Lower leg skin (tissue), 4 donors: ENCODE measurements at regions of chr10 and their contacts with region 1.

Region 1: DNA sequence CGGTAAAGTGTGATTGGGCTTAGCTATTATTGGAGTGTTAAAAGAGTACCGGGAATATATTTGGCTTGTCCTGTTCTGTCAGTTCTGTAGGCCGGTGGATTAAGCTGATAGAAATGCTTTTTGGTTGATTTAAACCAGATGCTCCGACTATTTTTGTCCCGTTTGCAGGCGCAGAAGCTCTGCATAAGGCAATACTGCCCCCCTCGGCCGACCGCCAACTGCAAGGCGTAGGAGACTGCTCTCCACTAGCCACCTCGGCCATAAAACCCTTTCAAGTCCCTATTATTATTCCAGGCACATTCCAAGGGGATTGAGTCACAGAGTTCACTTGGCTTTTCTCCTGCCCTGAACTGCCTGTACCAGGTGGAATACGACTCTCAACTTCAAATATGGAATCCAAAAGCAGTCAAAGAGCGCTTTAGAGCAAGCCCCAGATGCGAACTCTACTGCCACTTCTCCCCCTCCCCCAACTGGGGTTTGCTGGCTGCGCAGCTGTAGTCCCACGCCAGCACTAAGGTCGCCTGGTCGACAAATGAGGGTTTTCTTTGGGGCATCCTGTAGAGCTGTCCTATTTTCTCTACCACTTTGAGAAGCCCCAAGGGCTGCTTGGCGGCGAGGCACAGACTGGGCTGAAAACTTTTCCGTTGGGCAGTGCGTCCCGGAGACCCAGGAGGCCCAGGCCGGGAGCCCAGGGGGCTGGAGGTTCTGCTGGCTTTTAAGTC is 108.3 kb downstream of the REEP3 start:
- DNase-seq: peak; percentile 92 to 98
- H3K4me3 ChIP-seq: peak overlapping the region; percentile 39
- CTCF ChIP-seq: peak in 1 of 3 donors; percentile 39
- POLR2A ChIP-seq: peak in 1 of 2 donors; percentile 20

Region 2: GRCh38 chr10:63707254-63707910 is 77.9 kb after region 1 on chr10:
- intact Hi-C with region 1: loop called (anchors 5 kb)
- DNase-seq: peak in 1 of 2 donors; percentile 69
- H3K4me3 ChIP-seq: no peak overlapping the region
- CTCF ChIP-seq: no peak
- POLR2A ChIP-seq: no peak